Activated CD4-positive, alpha-beta memory T cell treated with anti-CD3 and anti-CD28 coated beads, Interleukin-2, amount 10 ng/mL, durations not matched to agents 7 days and 5 days (primary cell): ENCODE measurements at regions of chr10 and their contacts with region 1.

Region 1: DNA sequence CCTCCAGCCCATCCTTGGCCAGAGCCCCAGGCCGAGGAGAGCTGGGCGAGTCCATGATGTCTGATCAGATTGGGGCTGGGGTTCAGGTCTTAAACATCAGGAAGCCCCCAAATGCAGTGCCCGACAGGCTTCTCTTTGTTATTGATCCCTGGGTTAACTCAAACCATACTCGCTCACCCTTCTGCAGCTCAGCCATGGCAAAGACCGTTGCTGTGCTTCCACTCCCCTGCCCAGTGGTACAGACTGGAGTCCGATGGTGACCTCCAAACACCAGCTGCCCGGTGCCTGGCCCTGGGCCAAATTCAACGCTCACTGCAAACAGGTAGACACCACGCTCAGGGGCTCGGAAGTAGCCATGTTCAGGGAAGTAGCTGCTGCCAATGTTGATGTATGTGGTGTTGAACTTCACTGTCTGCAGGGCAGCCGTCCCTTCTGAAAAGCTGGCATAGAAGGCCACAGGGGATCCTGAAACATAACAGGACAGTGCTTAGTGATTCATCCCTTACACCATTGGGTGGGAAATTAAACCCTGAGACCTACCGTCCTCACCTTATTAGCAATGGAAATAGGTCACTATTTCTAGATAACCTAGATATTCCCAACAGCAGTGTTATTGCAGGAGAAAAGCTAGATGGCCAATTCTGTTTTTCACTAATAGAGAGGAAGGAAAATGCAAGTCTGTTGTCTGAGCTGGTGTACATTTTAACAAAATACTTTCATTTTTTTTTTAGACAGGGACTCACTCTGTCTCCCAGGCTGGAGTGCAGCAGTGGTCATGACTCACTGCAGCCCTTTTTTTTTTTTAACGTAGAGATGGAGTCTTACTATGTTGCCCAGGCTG is 20.5 kb downstream of the MMRN2 start:
- DNase-seq: peak; percentile 13
- H3K4me3 Mint-ChIP-seq: no peak overlapping the region
- H3K27ac Mint-ChIP-seq: no peak overlapping the region
- H3K4me1 Mint-ChIP-seq: peaks cover 13% of the 10 kb centered on the region
- H3K27me3 Mint-ChIP-seq: no peaks in the 10 kb centered on the region

Region 2: DNA sequence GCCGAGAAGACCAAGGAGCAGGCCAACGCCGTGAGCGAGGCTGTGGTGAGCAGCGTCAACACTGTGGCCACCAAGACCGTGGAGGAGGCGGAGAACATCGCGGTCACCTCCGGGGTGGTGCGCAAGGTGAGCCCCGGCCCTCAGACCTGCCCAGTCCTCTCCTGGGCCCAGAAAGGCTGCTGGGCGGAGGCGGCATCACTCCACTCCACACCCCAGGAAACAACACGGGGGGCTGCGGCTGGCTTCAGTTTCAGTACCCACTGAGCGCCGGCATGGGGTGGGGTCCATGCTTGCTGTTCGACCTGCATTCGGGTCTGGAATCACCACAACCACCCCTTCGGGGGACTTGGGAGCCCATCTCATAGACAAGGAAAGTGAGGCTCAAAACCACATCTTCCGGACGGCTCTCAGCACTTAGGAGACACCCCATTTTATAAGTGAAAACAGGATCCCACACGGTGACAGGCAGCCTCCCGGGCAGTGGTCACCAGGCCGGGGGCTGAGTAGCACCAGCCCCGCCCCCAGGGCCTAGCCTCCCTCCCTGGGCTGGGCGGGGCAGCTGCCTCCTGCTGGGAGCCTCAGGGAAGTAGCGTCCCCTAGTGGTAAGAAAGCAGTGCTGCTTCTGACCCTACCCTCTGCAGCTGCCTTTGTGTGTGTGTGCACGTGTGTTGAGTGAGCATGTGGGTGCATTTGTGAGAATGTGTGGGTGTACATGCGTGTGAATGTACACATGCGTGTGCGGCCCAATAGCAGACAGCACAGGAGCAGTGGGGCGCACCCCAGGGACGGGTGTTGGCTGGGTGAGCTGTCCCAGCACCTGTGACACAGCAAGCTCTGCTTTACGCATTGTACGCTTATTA is 23.4 kb after region 1 on chr10:
- CTCF ChIA-PET with region 1: interaction called, 10 read pairs
- POLR2A ChIA-PET with region 1: no interaction called
- DNase-seq: peak; percentile 62
- H3K4me3 Mint-ChIP-seq: no peak overlapping the region
- H3K27ac Mint-ChIP-seq: no peak overlapping the region
- H3K4me1 Mint-ChIP-seq: peaks cover 3% of the 10 kb centered on the region
- H3K27me3 Mint-ChIP-seq: no peaks in the 10 kb centered on the region

Region 3: DNA sequence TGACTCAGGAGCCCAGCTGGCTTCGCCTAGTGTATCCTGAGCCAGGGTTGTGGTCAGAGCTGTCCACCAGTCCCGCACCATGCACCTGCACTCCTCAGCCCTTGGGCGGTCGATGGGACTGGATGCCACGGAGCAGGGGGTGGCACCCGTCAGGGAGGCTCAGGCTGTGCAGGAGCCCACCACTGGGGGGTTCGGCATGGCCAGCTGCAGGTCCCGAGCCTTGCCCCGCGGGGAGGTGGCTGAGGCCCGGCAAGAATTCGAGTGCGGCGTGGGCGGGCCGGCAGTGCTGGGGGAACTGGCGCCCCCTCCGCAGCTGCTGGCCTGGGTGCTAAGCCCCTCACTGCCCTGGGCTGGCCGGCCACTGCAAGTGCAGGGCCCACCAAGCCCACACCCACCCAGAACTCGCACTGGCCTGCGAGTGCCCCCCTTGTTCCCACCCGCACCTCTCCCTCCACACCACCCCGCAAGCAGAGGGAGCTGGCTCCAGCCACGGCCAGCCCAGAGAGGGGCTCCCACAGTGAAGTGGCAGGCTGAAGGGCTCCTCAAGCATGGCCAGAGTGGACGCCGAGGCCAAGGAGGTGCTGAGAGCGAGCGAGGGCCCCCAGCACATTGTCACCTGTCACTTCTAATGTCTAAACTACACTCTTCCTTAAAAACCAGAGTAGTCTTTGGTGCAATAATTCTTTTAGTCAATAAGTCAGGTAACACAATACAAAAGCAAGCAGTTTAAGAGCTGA is 94.2 kb after region 1 on chr10:
- CTCF ChIA-PET with region 1: interaction called, 10 read pairs
- POLR2A ChIA-PET with region 1: no interaction called
- DNase-seq: no peak
- H3K4me3 Mint-ChIP-seq: no peak overlapping the region
- H3K27ac Mint-ChIP-seq: no peak overlapping the region
- H3K4me1 Mint-ChIP-seq: peaks cover 2% of the 10 kb centered on the region
- H3K27me3 Mint-ChIP-seq: peaks cover 18% of the 10 kb centered on the region